Activated CD4-positive, alpha-beta memory T cell treated with anti-CD3 and anti-CD28 coated beads for 36 hours (primary cell): ENCODE measurements at regions of chr2 and their contacts with region 1.

Region 1: DNA sequence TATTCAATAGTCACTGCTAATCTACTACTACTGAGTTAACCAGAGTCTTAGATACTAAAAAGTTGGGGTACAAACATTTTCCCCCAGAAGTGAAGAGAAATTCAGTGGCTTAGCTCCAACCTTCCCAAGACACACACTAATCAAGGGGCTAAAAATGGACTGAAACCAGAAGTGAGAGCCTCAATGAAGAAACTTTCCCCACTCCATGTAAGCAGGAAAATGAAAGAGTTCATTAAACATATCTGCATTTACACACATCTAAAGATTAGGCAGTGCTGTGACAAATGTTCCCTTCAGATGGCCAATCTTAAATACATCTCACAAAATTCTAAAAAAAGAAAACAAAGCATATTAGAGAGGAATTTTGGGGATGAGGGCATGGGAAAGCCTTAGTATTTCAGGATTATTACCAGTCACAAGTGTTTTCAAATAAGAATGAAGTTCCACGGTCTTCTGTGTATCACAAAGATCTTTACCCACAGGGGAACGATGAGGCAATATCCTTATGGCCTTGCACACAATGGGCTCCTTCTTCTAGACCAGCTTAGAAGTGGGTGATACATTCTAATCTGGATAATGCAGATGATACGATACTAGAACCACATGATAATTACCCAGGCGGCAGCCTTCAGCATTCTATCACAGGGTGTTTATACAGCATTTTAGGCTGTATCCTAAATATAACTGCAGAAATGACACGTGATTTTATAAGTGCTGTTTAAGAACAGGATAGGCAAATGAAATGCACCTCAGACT is 17.1 kb downstream of the ANKRD44 start:
- DNase-seq: peak; percentile 41
- H3K4me3 Mint-ChIP-seq: peak overlapping the region; percentile 74
- H3K27ac Mint-ChIP-seq: peak overlapping the region; percentile 100
- H3K4me1 Mint-ChIP-seq: peaks cover 89% of the 10 kb centered on the region
- H3K27me3 Mint-ChIP-seq: no peaks in the 10 kb centered on the region

Region 2: DNA sequence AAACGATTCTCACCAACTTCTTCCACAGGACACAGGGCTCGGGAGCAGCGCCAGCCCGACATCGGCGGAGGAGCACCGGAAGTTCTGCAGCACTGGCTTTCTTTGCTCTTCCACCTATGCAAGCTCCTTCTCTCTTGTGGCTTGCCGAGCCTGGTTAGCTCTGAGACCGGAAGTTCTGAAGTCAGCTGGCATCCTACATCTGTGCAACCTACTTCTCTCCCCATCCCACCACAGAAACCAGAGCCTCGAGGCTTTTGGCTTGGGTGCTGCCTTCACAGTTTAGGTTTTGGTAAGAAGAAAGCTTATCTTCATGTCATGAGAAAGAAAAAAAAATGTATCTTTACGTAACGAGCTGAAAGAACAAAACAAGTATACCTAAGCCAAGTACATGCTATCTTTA is 94.5 kb before region 1 on chr2:
- CTCF ChIA-PET with region 1: no interaction called
- POLR2A ChIA-PET with region 1: interaction called, 3 read pairs
- intact Hi-C with region 1: loop called (anchors 2 kb)
- DNase-seq: peak; percentile 95
- H3K4me3 Mint-ChIP-seq: peak overlapping the region; percentile 80
- H3K27ac Mint-ChIP-seq: peak overlapping the region; percentile 93
- H3K4me1 Mint-ChIP-seq: peaks cover 90% of the 10 kb centered on the region
- H3K27me3 Mint-ChIP-seq: no peaks in the 10 kb centered on the region

Region 3: GRCh38 chr2:197209742-197210408 is 83.6 kb before region 1 on chr2:
- CTCF ChIA-PET with region 1: no interaction called
- POLR2A ChIA-PET with region 1: interaction called, 5 read pairs
- intact Hi-C with region 1: loop called (anchors 1 kb)
- DNase-seq: peak; percentile 86
- H3K4me3 Mint-ChIP-seq: peak overlapping the region; percentile 58
- H3K27ac Mint-ChIP-seq: peak overlapping the region; percentile 94
- H3K4me1 Mint-ChIP-seq: peaks cover 98% of the 10 kb centered on the region
- H3K27me3 Mint-ChIP-seq: no peaks in the 10 kb centered on the region

Region 4: DNA sequence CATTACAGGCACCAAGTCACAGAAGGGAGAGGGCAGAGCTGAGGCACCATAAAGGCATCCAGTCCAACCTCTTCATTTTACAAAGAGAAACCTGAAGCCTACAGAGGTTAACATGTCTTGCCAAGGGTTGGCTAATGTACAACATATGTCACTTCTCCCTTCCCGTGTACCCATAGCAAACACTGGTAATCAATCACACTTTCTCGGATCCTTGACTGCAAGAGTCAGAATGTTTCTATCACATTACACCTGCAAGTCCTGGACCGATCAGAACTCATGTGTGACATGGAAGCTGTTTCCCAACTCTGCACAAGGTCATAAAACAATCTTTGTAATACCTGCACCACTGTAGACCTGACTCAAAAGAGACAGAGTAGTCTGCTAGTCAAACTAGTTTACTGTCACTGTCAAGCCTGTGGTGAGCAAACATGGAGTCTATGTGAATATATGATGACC is 11.2 kb after region 1 on chr2:
- CTCF ChIA-PET with region 1: interaction called, 10 read pairs
- POLR2A ChIA-PET with region 1: interaction called, 101 read pairs
- intact Hi-C with region 1: loop called (anchors 1 kb)
- DNase-seq: peak; percentile 62
- H3K4me3 Mint-ChIP-seq: peak overlapping the region; percentile 95
- H3K27ac Mint-ChIP-seq: peak overlapping the region; percentile 99
- H3K4me1 Mint-ChIP-seq: peaks cover 83% of the 10 kb centered on the region
- H3K27me3 Mint-ChIP-seq: no peaks in the 10 kb centered on the region

Region 5: DNA sequence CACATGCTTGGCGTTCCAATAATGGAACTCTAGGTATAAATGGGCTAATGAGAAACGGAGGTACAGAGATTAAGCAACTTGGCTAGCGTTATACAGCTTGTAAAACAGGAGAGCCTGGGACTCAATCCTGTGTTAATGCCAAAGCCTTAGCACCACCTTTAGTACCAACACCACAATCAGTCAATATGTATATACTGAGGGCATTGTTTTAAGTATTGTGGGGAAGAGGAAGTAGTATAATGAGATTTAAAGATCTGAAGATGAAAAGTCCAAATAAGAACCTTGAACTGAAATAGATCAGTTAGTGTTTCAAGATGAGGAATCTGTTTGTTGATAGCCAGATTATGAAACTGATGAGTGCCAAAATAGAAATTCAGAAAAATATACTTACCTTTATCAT is 419.8 kb after region 1 on chr2:
- CTCF ChIA-PET with region 1: no interaction called
- POLR2A ChIA-PET with region 1: no interaction called
- intact Hi-C with region 1: no loop called
- DNase-seq: no peak
- H3K4me3 Mint-ChIP-seq: no peak overlapping the region
- H3K27ac Mint-ChIP-seq: no peak overlapping the region
- H3K4me1 Mint-ChIP-seq: peaks cover 34% of the 10 kb centered on the region
- H3K27me3 Mint-ChIP-seq: no peaks in the 10 kb centered on the region